A673 (cell line): ENCODE measurements at regions of chr22 and their contacts with region 1.

Region 1: DNA sequence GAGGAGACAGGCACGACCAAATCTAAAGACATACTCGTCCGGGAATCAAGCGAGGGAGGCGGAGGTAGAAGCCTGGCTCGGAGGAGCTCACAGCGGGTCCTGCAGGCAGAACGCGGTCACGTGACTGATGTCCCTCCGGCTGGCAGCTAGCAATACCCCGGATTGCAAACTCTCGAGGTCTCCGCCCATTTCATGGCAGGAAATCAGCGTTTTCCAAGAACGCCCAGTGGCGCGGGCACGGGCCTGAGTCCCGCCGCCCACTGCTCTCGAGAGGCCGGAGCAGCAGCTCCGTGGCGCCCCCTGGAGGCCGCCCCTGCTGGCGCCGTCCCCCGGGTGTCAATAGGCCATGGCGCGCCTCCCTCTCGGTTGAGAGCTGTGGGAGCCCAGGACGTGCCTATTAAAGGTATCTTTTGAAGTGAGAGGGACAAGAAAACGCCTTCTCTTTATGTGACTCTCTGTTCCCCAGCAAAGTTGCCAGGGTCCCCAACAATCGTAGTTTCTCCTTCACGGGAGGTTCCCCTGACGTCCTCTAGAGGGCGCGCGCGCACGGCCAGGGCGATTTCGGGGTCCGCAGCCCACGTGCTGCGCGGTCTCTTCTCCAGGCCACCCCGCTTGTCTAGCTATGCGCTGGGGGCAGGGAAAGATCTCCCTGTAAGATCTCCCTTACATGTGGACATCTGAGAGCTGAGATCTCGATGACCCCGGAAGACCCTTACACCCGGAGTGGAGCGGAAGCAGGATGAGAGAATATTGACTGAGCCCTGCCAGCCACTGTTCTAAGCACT is 37.3 kb upstream of the RBFOX2 start:
- DNase-seq: peak; percentile 99
- H3K4me3 ChIP-seq: peak overlapping the region; percentile 54
- H3K27ac ChIP-seq: peak overlapping the region; percentile 86
- H3K4me1 ChIP-seq: peaks cover 6% of the 10 kb centered on the region
- H3K27me3 ChIP-seq: no peaks in the 10 kb centered on the region
- CTCF ChIP-seq: peak; percentile 100

Region 2: GRCh38 chr22:35627264-35628041 is 438.5 kb before region 1 on chr22:
- CTCF ChIA-PET with region 1: interaction called, 3 read pairs
- POLR2A ChIA-PET with region 1: no interaction called
- intact Hi-C with region 1: loop called (anchors 1 kb)
- DNase-seq: peak; percentile 90
- H3K4me3 ChIP-seq: peak overlapping the region; percentile 49
- H3K27ac ChIP-seq: peak overlapping the region; percentile 45
- H3K4me1 ChIP-seq: peaks cover 18% of the 10 kb centered on the region
- H3K27me3 ChIP-seq: no peaks in the 10 kb centered on the region
- CTCF ChIP-seq: peak; percentile 75

Region 3: DNA sequence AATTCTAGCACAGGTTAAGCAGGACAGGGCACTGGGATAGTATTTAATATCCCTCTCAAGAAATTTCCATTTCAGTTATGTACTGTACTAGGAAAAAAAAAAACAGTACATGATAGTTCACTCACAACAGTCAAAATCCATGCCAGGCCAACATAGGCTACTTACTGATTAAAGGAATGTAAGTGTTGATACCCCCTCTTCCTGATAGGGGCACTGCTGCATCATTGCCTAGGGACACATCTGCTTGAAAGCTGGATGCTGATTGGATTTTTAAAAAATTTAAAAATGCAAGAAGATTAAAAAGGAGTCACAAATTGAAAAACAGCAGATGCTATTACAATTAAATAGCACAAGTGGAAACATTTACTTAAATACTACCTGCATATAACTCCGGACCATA is 304.9 kb before region 1 on chr22:
- CTCF ChIA-PET with region 1: no interaction called
- POLR2A ChIA-PET with region 1: no interaction called
- intact Hi-C with region 1: loop called (anchors 5 kb)
- DNase-seq: peak; percentile 58
- H3K4me3 ChIP-seq: no peak overlapping the region
- H3K27ac ChIP-seq: no peak overlapping the region
- H3K4me1 ChIP-seq: no peaks in the 10 kb centered on the region
- H3K27me3 ChIP-seq: no peaks in the 10 kb centered on the region
- CTCF ChIP-seq: peak; percentile 63

Region 4: DNA sequence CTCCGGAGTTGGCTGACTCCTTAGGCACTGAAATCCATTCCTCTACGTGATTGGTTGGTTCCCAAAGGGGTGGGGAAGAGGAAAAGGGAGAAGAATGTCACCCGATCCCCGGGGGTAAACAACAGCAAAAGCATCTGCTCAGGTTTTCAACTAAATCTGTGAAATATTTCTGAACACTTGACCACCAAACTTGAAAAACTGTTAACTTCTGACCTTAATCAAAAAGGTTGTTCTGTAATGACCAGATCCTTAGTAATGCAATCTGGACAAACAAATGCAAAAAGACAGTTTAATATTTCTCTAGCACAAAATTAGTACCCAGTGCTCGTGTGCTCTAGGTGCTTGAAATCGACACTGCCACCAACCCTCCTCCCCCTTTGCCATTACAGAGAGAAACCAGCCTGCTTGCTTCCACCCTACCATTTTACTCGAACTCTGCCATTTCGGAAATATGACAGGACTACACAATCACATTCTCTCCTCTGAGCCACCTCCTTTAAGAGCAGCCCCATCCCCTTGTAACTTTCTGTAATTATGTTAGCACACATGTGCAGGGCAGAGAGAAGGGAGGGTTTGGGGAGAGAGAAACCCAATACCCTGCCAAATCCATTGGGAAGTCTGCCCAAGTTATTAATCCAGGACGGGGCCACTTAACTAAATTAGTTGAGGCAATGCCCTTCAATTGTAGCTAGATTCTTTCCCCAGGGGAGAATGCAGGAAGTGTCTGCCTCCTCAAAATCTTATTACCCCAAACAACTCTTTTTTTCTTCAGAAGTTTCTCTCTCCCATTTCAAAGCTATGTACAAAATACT is 151.1 kb before region 1 on chr22:
- CTCF ChIA-PET with region 1: interaction called, 11 read pairs
- POLR2A ChIA-PET with region 1: no interaction called
- intact Hi-C with region 1: loop called (anchors 5 kb)
- DNase-seq: peak; percentile 98
- H3K4me3 ChIP-seq: peak overlapping the region; percentile 50
- H3K27ac ChIP-seq: peak overlapping the region; percentile 95
- H3K4me1 ChIP-seq: peaks cover 85% of the 10 kb centered on the region
- H3K27me3 ChIP-seq: no peaks in the 10 kb centered on the region
- CTCF ChIP-seq: no peak

Region 5: GRCh38 chr22:35930933-35931332 is 135.0 kb before region 1 on chr22:
- CTCF ChIA-PET with region 1: interaction called, 9 read pairs
- POLR2A ChIA-PET with region 1: no interaction called
- intact Hi-C with region 1: loop called (anchors 2 kb)
- DNase-seq: peak; percentile 54
- H3K4me3 ChIP-seq: no peak overlapping the region
- H3K27ac ChIP-seq: no peak overlapping the region
- H3K4me1 ChIP-seq: peaks cover 7% of the 10 kb centered on the region
- H3K27me3 ChIP-seq: no peaks in the 10 kb centered on the region
- CTCF ChIP-seq: peak; percentile 70

Region 6: DNA sequence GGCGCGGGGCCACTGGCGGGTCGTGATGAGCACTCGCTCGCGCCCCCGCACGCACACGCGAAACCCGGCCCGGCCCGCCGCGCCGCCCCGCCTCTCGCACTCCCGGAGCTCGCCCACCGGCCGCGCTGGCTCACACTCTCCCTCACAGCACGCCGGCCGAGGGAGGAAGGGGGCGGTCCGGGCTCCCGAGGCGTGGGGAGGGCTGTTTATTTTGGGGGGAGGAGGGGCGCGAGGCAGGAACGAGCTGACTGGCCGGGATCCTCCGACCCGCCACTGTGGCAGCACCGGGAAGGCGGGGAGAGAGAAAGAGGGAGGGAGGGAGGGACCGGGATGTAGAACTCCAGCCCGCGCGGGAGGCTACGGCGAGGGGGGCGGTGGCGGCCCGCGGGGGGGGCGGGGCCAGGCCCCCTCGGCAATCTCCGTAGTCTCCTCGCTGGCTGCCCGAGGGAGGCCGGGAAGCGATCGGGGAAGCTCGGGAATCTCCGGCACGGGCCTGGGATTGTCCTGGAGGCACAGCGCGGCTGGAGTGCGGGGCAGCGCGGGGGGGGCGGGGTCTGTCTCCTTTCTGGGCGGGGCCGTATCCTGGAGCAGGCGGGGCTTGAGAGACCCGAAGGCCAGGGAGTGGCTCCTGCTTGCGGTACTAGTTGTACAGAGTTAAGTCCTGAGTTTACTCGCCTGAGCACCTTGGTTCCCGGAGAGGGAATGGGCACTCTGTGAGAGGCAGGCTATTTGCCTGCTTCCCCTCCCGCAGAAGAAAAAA is 37.1 kb before region 1 on chr22 and contains the start of gene RBFOX2:
- CTCF ChIA-PET with region 1: interaction called, 13 read pairs
- POLR2A ChIA-PET with region 1: no interaction called
- intact Hi-C with region 1: no loop called
- DNase-seq: peak; percentile 97
- H3K4me3 ChIP-seq: peak within 1 kb of the TSS; percentile 89
- H3K27ac ChIP-seq: peak within 1 kb of the TSS; percentile 84
- H3K4me1 ChIP-seq: peaks cover 21% of the 10 kb centered on the region
- H3K27me3 ChIP-seq: no peaks in the 10 kb centered on the region
- CTCF ChIP-seq: no peak
- total RNA-seq, gene RBFOX2: 142 and 154 TPM in 2 replicates

Region 7: GRCh38 chr22:36211237-36211861 is 145.4 kb after region 1 on chr22:
- CTCF ChIA-PET with region 1: no interaction called
- POLR2A ChIA-PET with region 1: no interaction called
- intact Hi-C with region 1: no loop called
- DNase-seq: peak; percentile 83
- H3K4me3 ChIP-seq: no peak overlapping the region
- H3K27ac ChIP-seq: peak overlapping the region; percentile 39
- H3K4me1 ChIP-seq: peaks cover 15% of the 10 kb centered on the region
- H3K27me3 ChIP-seq: no peaks in the 10 kb centered on the region
- CTCF ChIP-seq: no peak

Region 8: DNA sequence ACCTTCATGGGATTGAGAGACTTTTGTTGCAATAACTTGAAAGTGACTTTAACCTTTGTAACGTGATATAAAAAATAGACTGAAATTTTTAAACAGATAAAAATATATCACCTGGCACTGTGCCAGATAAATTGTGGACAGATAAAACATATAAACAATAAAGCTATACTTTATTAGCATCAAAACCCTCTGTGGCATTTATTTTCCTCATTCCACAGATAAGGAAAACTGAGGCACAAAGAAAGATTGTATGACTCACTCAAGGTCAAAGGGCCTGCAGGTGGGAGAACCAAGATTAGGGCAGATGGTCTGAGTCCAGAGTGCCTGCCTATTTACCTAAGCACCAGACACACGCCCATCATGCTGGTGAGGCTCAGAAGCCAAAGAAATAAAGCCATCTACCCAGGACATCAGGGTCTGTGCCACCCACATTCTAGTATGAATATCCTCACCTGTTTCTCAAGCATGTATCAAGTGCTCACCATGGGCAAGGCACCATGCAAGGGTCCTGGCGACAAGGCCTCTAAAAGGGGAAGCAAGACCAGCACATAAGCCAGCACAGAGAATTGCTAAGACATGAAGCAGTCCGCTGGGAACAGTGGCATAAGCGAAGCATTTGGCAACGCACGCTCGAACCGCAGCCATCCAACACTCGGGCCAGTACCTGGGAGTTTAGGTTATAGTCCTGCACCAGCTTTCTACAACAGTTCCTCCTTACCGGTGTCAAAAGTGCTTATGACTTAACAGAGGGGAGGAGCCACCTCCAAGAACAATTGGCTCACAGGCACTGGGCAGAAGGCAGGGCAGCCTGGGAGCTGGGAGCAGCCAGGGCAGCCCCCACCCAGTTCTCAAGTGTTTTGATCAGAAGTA is 304.2 kb after region 1 on chr22:
- CTCF ChIA-PET with region 1: no interaction called
- POLR2A ChIA-PET with region 1: interaction called, 13 read pairs
- intact Hi-C with region 1: no loop called
- DNase-seq: peak; percentile 33
- H3K4me3 ChIP-seq: peak overlapping the region; percentile 10
- H3K27ac ChIP-seq: peak overlapping the region; percentile 87
- H3K4me1 ChIP-seq: peaks cover 71% of the 10 kb centered on the region
- H3K27me3 ChIP-seq: no peaks in the 10 kb centered on the region
- CTCF ChIP-seq: no peak